ENCODE measurements at regions of chr11 and their contacts with region 1.

Region 1: GRCh38 chr11:12235947-12236743 is 125.8 kb downstream of the MICAL2 start:
- DNase-seq: peak; percentile 55
- H3K4me3 ChIP-seq: no peak overlapping the region; a peak in 1 of 4 replicates
- H3K27ac ChIP-seq: peak overlapping the region in 1 of 2 experiments; percentile 97; a peak in 2 of 4 replicates
- H3K4me1 ChIP-seq: peaks cover 0 to 23% of the 10 kb centered on the region in 2 experiments; a peak in 3 of 4 replicates
- H3K27me3 ChIP-seq: no peaks in the 10 kb centered on the region
- CTCF ChIP-seq: peak; percentile 72
- EP300 ChIP-seq: no peak
- RAD21 ChIP-seq: peak; percentile 71

Region 2: DNA sequence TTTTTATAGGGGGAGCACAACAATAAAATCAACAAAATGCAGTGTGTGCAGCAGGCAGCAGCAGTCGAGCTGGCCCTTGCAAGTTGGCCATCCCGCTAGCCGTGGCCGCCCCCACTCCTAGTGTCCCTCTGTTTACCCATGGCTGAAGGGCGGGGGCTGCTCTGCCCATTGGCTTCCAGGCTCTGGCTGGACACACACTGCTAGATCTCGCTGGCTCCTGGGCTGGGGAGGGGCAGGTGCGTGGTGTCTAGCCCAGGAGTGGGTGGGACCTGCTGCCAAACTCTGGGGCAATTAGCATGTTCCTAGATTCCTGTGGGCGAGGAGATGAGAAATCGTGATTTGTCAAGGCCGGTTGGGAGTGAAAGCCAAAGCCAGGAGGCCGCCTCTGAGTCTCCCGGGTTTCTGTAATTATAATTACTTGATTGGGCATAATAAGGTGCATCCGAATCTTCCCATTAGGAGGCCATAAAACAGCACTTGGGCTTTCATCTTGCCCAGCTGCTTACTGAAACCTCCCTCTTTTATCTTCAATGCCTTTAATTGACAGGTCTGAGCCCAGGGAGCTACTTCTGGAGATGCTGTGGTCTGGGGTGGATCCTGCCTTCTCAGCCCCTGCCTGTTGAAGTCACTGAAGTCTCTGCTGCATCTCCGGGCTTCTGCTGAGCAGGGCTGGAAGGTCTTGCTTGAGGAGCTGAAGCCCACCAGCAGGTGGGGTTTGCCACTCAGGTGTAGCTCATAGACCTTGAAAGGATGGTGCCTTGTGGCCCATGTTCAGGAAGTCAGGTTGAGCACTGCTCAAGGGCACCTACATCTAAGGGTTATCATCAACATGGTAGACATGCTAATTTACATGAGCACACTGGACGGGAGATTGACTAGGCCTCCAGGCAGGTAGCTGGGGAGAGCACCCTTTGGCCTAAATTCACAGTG is 183.2 kb before region 1 on chr11:
- CTCF ChIA-PET with region 1: interaction called, 20 read pairs
- POLR2A ChIA-PET with region 1: no interaction called
- DNase-seq: no peak
- H3K4me3 ChIP-seq: no peak overlapping the region
- H3K27ac ChIP-seq: no peak overlapping the region
- H3K4me1 ChIP-seq: no peaks in the 10 kb centered on the region
- H3K27me3 ChIP-seq: no peaks in the 10 kb centered on the region
- CTCF ChIP-seq: no peak
- EP300 ChIP-seq: no peak
- RAD21 ChIP-seq: no peak

Region 3: GRCh38 chr11:12216671-12217374 is 19.3 kb before region 1 on chr11:
- CTCF ChIA-PET with region 1: interaction called, 21 read pairs
- POLR2A ChIA-PET with region 1: no interaction called
- DNase-seq: peak; percentile 72
- H3K4me3 ChIP-seq: no peak overlapping the region
- H3K27ac ChIP-seq: peak overlapping the region in 1 of 2 experiments; percentile 59
- H3K4me1 ChIP-seq: peaks cover 8 to 20% of the 10 kb centered on the region in 2 experiments; a peak in 3 of 4 replicates
- H3K27me3 ChIP-seq: no peaks in the 10 kb centered on the region
- CTCF ChIP-seq: no peak
- EP300 ChIP-seq: no peak
- RAD21 ChIP-seq: no peak

Region 4: DNA sequence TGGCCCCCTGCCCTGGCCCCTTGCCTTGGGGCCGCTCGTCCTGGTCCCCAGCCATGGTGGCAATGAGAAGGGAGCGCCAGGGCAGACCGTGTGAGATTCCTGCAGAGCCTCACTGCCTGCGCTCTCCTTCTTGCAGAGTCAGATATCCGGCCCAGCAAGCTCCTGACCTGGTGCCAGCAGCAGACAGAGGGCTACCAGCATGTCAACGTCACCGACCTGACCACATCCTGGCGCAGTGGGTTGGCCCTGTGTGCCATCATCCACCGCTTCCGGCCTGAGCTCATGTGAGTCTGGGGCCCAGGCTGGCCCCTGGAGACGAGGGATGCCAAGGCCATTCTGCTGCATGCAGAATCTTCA is 11.6 kb before region 1 on chr11:
- CTCF ChIA-PET with region 1: interaction called, 48 read pairs
- POLR2A ChIA-PET with region 1: no interaction called
- DNase-seq: no peak
- H3K4me3 ChIP-seq: no peak overlapping the region
- H3K27ac ChIP-seq: peak overlapping the region; percentile 53 to 85; a peak in 3 of 4 replicates
- H3K4me1 ChIP-seq: peaks cover 0 to 12% of the 10 kb centered on the region in 2 experiments; a peak in 2 of 4 replicates
- H3K27me3 ChIP-seq: no peaks in the 10 kb centered on the region
- CTCF ChIP-seq: no peak
- EP300 ChIP-seq: peak in 1 of 2 experiments; percentile 60; a peak in 1 of 4 replicates
- RAD21 ChIP-seq: no peak

Region 5: GRCh38 chr11:12248338-12248737 is 12.2 kb after region 1 on chr11:
- CTCF ChIA-PET with region 1: interaction called, 24 read pairs
- POLR2A ChIA-PET with region 1: no interaction called
- DNase-seq: peak; percentile 59
- H3K4me3 ChIP-seq: no peak overlapping the region
- H3K27ac ChIP-seq: no peak overlapping the region
- H3K4me1 ChIP-seq: peaks cover 0 to 45% of the 10 kb centered on the region in 2 experiments; a peak in 1 of 4 replicates
- H3K27me3 ChIP-seq: no peaks in the 10 kb centered on the region
- CTCF ChIP-seq: no peak
- EP300 ChIP-seq: no peak
- RAD21 ChIP-seq: no peak